Endothelial cell of umbilical vein (primary cell): ENCODE measurements at regions of chr1 and their contacts with region 1.

Region 1: GRCh38 chr1:983799-984473 is 2.0 kb upstream of the PERM1 start:
- DNase-seq: no peak
- H3K4me3 ChIP-seq: no peak overlapping the region
- H3K27ac ChIP-seq: no peak overlapping the region
- H3K4me1 ChIP-seq: no peaks in the 10 kb centered on the region
- H3K27me3 ChIP-seq: peaks cover 2 to 3% of the 10 kb centered on the region in 2 experiments
- CTCF ChIP-seq: peak; percentile 30 to 92
- POLR2A ChIP-seq: no peak

Region 2: DNA sequence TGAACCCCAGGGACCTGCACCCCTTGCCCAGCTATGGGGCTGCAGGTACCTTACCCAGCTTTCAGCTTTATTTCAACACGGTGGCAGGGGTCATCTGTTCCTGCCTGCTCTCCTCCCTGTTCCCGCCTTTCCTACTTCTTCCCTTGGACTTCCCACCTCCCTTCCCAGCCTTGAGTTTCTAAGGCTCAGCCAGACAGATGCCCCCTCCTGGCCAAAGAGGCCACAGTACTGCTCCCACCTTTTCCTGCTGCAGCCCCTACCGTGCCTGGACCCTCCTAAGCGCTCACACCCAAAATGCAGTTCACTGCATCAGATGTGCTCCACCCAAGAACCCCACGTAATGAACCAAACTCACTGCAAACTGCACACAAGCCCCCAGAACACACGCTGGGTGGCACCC is 32.6 kb before region 1 on chr1:
- CTCF ChIA-PET with region 1: no interaction called
- POLR2A ChIA-PET with region 1: no interaction called
- dilution Hi-C with region 1: no loop called
- intact Hi-C with region 1: no loop called
- DNase-seq: no peak
- H3K4me3 ChIP-seq: no peak overlapping the region
- H3K27ac ChIP-seq: no peak overlapping the region
- H3K4me1 ChIP-seq: no peaks in the 10 kb centered on the region
- H3K27me3 ChIP-seq: no peaks in the 10 kb centered on the region
- CTCF ChIP-seq: peak; percentile 20 to 52
- POLR2A ChIP-seq: no peak

Region 3: DNA sequence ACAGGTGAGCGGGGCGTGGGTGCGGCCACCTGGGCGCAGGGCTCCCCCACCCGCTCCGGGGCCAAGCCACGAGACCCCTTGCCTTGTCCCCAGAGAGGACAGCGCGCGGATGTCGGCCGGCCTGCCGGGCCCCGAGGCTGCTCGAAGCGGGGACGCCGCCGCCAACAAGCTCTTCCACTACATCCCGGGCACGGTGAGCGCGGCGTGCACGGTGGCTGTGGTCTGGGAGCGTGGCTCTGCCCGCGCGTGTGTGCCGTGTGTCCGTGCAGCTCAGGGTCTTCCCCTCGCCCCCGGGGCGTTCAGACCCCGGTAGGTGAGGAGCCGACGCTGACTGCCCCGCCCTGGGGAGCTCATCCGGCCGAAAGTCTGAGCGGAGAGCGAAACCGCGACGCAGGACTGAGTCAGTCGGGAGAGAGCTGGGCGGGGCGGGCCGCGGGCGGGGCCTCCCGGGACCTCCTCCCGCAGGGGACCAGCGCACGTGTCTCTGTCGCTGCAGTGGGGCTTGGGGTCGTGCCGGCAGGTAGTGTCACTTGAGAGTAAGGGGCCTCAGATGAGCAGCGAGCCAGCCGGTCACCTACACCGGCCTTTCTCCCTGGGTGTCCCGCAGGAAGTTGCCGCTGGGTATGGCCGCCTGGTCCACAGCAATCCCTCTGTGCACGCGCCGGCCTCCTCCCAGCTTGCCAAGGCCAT is 17.2 kb before region 1 on chr1:
- CTCF ChIA-PET with region 1: interaction called, 13 read pairs
- POLR2A ChIA-PET with region 1: no interaction called
- dilution Hi-C with region 1: no loop called
- intact Hi-C with region 1: no loop called
- DNase-seq: peak; percentile 57
- H3K4me3 ChIP-seq: peak overlapping the region; percentile 7 to 60 (median 33)
- H3K27ac ChIP-seq: peak overlapping the region; percentile 47
- H3K4me1 ChIP-seq: peaks cover 11% of the 10 kb centered on the region
- H3K27me3 ChIP-seq: peaks cover 2% of the 10 kb centered on the region in 2 experiments
- CTCF ChIP-seq: no peak
- POLR2A ChIP-seq: peak; percentile 50

Region 4: DNA sequence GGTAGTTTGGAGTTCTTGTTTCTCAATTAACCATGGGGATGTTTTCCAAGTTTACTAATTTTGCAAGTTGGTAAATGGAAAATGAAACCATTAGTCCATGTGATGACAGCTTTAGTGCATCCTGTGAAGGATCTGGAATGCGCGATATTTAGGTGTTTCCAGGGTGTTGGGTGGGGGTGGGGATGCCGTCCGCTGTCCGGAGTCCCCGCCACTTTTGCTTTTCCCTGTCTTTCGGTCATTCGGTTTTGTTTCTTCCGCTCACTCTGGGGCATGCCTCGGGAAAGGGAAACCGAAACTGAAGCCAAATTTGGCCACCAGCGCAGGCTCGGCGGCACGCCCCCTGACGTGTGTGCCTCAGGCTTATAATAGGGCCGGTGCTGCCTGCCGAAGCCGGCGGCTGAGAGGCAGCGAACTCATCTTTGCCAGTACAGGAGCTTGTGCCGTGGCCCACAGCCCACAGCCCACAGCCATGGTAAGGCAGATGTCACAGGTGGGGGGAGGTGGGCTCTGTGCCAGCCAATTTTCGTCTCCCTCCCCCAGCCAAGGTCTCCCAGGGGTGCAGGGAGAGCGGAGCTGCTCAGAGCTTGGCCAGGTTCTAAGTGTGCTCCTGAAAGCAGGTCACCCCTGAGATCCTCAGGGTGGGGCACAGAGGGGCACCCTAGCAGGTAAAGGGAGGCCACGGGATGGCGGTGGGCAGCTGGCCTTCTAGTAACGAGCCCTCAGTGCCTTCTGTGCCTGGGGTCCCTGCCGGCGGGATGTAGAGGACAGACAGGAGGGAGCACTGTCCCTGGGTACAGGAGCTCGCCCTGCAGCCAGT is 29.4 kb after region 1 on chr1 and contains the start of gene ISG15:
- CTCF ChIA-PET with region 1: interaction called, 11 read pairs
- POLR2A ChIA-PET with region 1: no interaction called
- dilution Hi-C with region 1: no loop called
- intact Hi-C with region 1: no loop called
- DNase-seq: peak; percentile 89
- H3K4me3 ChIP-seq: peak within 1 kb of the TSS; percentile 41 to 83 (median 81)
- H3K27ac ChIP-seq: peak within 1 kb of the TSS; percentile 54
- H3K4me1 ChIP-seq: peaks cover 10% of the 10 kb centered on the region
- H3K27me3 ChIP-seq: no peaks in the 10 kb centered on the region
- CTCF ChIP-seq: no peak
- POLR2A ChIP-seq: peak; percentile 61
- total RNA-seq, gene ISG15: 44.6 and 47.6 TPM in 2 replicates

Region 5: DNA sequence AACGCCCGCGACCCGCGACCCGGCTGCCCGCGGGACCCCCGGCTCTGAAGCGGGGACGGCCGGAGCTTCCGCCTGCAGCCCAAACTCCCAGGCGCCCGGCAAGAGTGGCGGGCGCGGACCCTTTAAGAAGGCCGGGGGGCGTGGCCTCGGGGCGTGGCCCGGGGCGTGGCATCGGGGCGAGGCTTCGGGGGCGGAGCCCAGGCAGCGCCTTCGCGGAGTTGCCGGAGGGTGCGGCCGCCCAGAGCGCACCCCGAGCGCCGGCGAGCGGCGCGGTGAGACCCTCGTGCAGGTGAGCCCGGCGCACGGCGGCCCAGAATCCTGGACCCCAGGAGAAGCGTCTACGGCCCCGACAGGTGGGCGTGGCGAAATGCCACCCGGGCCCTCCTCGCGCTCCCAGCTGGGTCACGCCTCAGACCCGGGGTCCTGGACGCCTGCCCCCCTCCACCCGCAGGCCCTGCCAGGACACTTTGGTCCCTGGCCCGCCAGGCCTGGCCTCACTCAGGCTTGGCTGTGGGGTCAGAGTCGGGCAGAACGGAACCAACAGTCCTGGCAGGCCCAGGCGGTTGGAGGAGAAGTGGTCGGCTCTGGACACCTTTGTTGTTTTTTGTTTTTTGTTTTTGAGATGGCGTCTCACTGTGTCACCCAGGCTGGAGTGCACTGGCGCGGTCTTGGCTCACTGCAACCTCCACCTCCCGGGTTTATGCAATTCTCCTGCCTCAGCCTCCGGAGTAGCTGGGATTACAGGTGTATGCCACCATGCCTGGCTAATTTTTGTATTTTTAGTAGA is 75.8 kb after region 1 on chr1:
- CTCF ChIA-PET with region 1: interaction called, 53 read pairs
- POLR2A ChIA-PET with region 1: no interaction called
- dilution Hi-C with region 1: no loop called
- intact Hi-C with region 1: loop called (anchors 1 kb)
- DNase-seq: peak; percentile 70
- H3K4me3 ChIP-seq: peak overlapping the region; percentile 35 to 51 (median 43)
- H3K27ac ChIP-seq: no peak overlapping the region
- H3K4me1 ChIP-seq: peaks cover 16% of the 10 kb centered on the region
- H3K27me3 ChIP-seq: peaks cover 0 to 10% of the 10 kb centered on the region in 2 experiments
- CTCF ChIP-seq: no peak
- POLR2A ChIP-seq: no peak

Region 6: GRCh38 chr1:1144122-1144842 is 160.3 kb after region 1 on chr1:
- CTCF ChIA-PET with region 1: no interaction called
- POLR2A ChIA-PET with region 1: no interaction called
- dilution Hi-C with region 1: no loop called
- intact Hi-C with region 1: no loop called
- DNase-seq: no peak
- H3K4me3 ChIP-seq: no peak overlapping the region
- H3K27ac ChIP-seq: no peak overlapping the region
- H3K4me1 ChIP-seq: no peaks in the 10 kb centered on the region
- H3K27me3 ChIP-seq: peaks cover 0 to 2% of the 10 kb centered on the region in 2 experiments
- CTCF ChIP-seq: no peak
- POLR2A ChIP-seq: no peak

Region 7: DNA sequence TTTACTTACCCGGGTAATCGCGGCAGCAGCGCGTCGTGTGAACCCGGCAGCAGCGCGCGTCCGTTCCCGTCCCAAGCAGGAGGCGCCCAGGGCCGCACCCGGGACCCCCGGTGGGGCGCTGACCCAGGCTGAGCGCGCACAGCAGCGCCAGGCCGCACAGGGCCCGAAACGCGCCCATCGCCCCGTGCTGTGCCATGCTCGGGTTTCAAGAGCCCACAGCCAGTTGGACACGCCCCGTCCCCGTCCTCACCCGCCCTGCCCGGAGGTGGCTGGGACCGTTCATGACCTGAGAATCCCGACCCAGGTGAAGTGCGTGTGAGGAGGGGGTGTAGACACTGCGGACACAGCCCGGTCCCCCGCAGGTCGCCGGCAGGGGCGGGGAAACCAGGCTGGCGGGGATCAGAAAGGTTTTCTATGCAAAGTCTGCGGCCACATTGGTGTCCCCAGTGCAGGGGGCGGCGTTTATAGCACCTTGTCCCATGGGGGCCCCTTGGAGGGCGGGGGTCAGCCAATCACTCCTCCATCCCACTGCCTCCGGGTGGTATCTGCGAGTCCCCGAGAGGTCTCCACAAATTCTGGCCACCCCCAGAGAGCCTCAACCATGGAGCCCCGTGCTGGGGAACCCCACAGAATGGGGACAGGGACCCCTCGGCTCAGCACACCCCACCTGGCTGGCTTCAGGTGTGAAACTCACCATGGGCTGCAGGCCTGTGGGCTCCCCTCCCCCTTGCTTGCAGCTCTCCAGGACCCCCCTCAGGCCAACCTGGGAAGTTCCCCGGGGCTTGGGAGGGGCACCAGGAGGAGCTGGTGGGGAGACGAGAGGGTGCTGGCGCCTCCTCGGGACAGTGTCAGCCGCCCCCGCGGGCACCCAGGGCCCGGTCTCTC is 222.7 kb after region 1 on chr1 and contains the start of gene TNFRSF18:
- CTCF ChIA-PET with region 1: no interaction called
- POLR2A ChIA-PET with region 1: no interaction called
- dilution Hi-C with region 1: no loop called
- intact Hi-C with region 1: no loop called
- DNase-seq: no peak
- H3K4me3 ChIP-seq: no peak within 1 kb of the TSS
- H3K27ac ChIP-seq: no peak within 1 kb of the TSS
- H3K4me1 ChIP-seq: no peaks in the 10 kb centered on the region
- H3K27me3 ChIP-seq: peaks cover 3 to 15% of the 10 kb centered on the region in 2 experiments
- CTCF ChIP-seq: no peak
- POLR2A ChIP-seq: no peak
- total RNA-seq, gene TNFRSF18: not detected in 2 replicates

Region 8: DNA sequence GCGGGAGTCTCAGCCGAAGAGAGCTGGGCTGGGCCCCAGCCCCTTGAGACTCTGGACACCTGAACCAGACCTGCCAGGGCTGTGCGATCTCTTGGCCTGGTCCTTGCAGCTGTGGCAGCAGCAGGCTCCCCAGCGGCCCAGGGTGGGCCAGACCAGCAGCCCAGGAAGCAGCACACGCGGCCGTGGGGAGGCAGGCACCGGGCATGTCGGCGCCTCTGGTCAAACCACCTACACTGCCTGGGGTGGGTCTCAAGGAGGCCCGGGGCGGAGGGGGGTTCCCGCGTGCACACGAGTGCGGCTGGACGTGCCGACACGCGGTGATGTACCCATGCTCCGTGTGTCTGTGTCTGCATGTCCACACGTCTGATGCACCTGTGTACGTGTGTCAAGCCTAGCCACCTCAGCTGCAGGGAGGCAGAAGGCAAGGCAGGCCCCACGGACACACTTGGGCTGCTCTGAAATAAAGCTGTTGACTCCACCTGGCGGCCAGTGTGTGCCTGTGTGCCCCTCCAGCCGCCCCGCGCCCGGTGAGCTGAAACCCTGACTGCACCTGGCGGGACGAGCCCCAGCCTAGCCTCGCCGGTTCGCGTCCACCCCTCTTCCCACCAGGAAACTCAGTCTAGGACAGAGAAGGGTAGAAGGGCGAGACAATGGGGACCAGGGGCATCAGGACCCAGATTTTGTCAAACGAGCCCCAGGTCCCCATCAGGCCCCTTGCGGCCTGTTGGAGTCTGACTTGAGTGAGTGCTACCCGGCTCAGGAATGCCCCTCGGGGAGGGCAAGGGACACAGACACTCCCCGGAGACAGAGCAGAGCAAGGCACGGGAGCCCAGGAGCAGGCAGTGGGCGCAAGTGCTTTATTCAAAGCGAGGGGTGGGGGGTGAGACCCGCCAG is 307.9 kb after region 1 on chr1:
- CTCF ChIA-PET with region 1: interaction called, 77 read pairs
- POLR2A ChIA-PET with region 1: no interaction called
- dilution Hi-C with region 1: no loop called
- intact Hi-C with region 1: loop called (anchors 1 kb)
- DNase-seq: peak; percentile 50
- H3K4me3 ChIP-seq: no peak overlapping the region
- H3K27ac ChIP-seq: no peak overlapping the region
- H3K4me1 ChIP-seq: no peaks in the 10 kb centered on the region
- H3K27me3 ChIP-seq: no peaks in the 10 kb centered on the region
- CTCF ChIP-seq: peak; percentile 73 to 83
- POLR2A ChIP-seq: no peak

Region 9: GRCh38 chr1:1665800-1666251 is 681.9 kb after region 1 on chr1:
- CTCF ChIA-PET with region 1: no interaction called
- POLR2A ChIA-PET with region 1: no interaction called
- dilution Hi-C with region 1: no loop called
- intact Hi-C with region 1: no loop called
- DNase-seq: no peak
- H3K4me3 ChIP-seq: no peak overlapping the region
- H3K27ac ChIP-seq: no peak overlapping the region
- H3K4me1 ChIP-seq: no peaks in the 10 kb centered on the region
- H3K27me3 ChIP-seq: no peaks in the 10 kb centered on the region
- CTCF ChIP-seq: peak; percentile 49 to 59
- POLR2A ChIP-seq: no peak